H1 (cell line): ENCODE measurements at regions of chr1 and their contacts with region 1.

Region 1: DNA sequence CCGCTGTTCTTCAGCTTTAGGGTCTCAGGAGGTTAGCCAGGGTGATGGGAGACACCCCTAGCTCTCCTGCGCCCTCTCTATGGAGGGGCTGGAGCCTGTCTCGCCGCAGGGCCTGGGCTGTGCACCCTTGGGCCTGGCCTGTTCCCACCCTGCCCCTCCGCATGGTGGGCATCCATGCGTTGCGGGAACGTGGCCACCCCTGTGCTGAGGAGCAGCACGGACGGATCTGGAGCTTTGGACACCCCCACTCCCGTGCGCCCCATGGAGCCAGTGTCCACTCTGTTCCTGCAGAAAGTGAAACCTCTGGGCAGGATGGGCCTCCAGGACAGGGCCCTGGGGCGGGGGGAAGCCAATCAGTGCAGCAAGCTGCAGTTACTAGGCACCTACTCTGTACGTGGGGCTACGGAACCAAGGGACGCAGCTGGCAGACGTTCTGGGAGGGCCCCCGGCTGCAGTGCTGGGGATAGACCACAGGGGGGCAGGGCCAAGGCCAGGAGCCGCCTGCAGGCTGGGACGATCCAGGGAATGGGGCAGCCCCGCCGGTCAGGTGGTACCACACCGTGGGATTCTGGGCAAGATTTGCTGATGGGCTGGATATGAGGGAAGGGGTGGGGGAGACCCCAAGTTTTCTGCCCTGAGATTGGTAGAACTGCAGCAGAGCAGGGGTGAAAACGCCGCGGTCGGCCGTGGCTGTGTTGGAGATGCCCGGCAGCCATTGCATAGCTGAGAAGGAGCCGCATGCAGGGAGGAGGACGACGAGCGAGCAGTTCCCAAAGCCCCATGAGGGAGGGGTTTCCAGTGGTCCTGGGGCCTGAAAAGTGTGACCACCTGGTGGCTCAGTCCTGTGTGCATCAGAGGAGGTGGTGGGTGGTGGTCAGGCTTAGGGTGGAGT is 43.3 kb downstream of the TP73 start:
- DNase-seq: peak in 1 of 2 experiments; percentile 93
- H3K4me3 ChIP-seq: no peak overlapping the region
- H3K27ac ChIP-seq: no peak overlapping the region
- H3K4me1 ChIP-seq: peaks cover 0 to 3% (median 1%) of the 10 kb centered on the region in 4 experiments; a peak in 2 of 7 replicates
- H3K27me3 ChIP-seq: peaks cover 0 to 7% (median 4%) of the 10 kb centered on the region in 4 experiments; a peak in 3 of 7 replicates
- CTCF ChIP-seq: peak in 2 of 3 experiments; percentile 82 to 93; a peak in 3 of 4 replicates
- EP300 ChIP-seq: no peak
- POLR2A ChIP-seq: no peak
- RAD21 ChIP-seq: peak; percentile 60 to 72

Region 2: GRCh38 chr1:3683992-3684391 is 11.6 kb before region 1 on chr1:
- CTCF ChIA-PET with region 1: interaction called, 32 read pairs
- POLR2A ChIA-PET with region 1: interaction called, 3 read pairs
- DNase-seq: peak in 1 of 2 experiments; percentile 93
- H3K4me3 ChIP-seq: peak overlapping the region in 2 of 4 experiments; percentile 15 to 45; a peak in 4 of 8 replicates
- H3K27ac ChIP-seq: no peak overlapping the region
- H3K4me1 ChIP-seq: peaks cover 0 to 27% (median 14%) of the 10 kb centered on the region in 4 experiments; a peak in 6 of 7 replicates
- H3K27me3 ChIP-seq: peaks cover 0 to 8% (median 3%) of the 10 kb centered on the region in 4 experiments; a peak in 3 of 7 replicates
- CTCF ChIP-seq: no peak
- EP300 ChIP-seq: no peak
- POLR2A ChIP-seq: no peak
- RAD21 ChIP-seq: no peak

Region 3: GRCh38 chr1:3712573-3713535 is 17.3 kb after region 1 on chr1:
- CTCF ChIA-PET with region 1: interaction called, 42 read pairs
- POLR2A ChIA-PET with region 1: interaction called, 3 read pairs
- DNase-seq: no peak
- H3K4me3 ChIP-seq: no peak overlapping the region
- H3K27ac ChIP-seq: no peak overlapping the region
- H3K4me1 ChIP-seq: peaks cover 4 to 28% (median 20%) of the 10 kb centered on the region in 4 experiments
- H3K27me3 ChIP-seq: peaks cover 0 to 17% (median 7%) of the 10 kb centered on the region in 4 experiments; a peak in 4 of 7 replicates
- CTCF ChIP-seq: no peak
- EP300 ChIP-seq: no peak
- POLR2A ChIP-seq: no peak
- RAD21 ChIP-seq: no peak

Region 4: GRCh38 chr1:3717715-3718601 is 22.4 kb after region 1 on chr1:
- CTCF ChIA-PET with region 1: interaction called, 42 read pairs
- POLR2A ChIA-PET with region 1: interaction called, 5 read pairs
- DNase-seq: peak in 1 of 2 experiments; percentile 92
- H3K4me3 ChIP-seq: peak overlapping the region in 1 of 4 experiments; percentile 45; a peak in 2 of 8 replicates
- H3K27ac ChIP-seq: no peak overlapping the region
- H3K4me1 ChIP-seq: peaks cover 0 to 18% (median 8%) of the 10 kb centered on the region in 4 experiments; a peak in 5 of 7 replicates
- H3K27me3 ChIP-seq: peaks cover 0 to 4% (median 0%) of the 10 kb centered on the region in 4 experiments; a peak in 3 of 7 replicates
- CTCF ChIP-seq: no peak; a peak in 1 of 4 replicates
- EP300 ChIP-seq: no peak
- POLR2A ChIP-seq: no peak
- RAD21 ChIP-seq: no peak

Region 5: GRCh38 chr1:3785456-3786157 is 90.0 kb after region 1 on chr1:
- CTCF ChIA-PET with region 1: no interaction called
- POLR2A ChIA-PET with region 1: no interaction called
- DNase-seq: peak in 1 of 2 experiments; percentile 84
- H3K4me3 ChIP-seq: no peak overlapping the region
- H3K27ac ChIP-seq: no peak overlapping the region
- H3K4me1 ChIP-seq: peaks cover 0 to 13% (median 10%) of the 10 kb centered on the region in 4 experiments; a peak in 5 of 7 replicates
- H3K27me3 ChIP-seq: no peaks in the 10 kb centered on the region
- CTCF ChIP-seq: peak; percentile 76 to 88 (median 87)
- EP300 ChIP-seq: no peak
- POLR2A ChIP-seq: no peak
- RAD21 ChIP-seq: peak; percentile 87 to 90

Region 6: GRCh38 chr1:3836421-3836820 is 140.8 kb after region 1 on chr1:
- CTCF ChIA-PET with region 1: no interaction called
- POLR2A ChIA-PET with region 1: no interaction called
- DNase-seq: no peak
- H3K4me3 ChIP-seq: no peak overlapping the region
- H3K27ac ChIP-seq: no peak overlapping the region
- H3K4me1 ChIP-seq: no peaks in the 10 kb centered on the region
- H3K27me3 ChIP-seq: no peaks in the 10 kb centered on the region
- CTCF ChIP-seq: no peak
- EP300 ChIP-seq: no peak
- POLR2A ChIP-seq: no peak
- RAD21 ChIP-seq: no peak

Region 7: GRCh38 chr1:3922201-3922725 is 226.7 kb after region 1 on chr1:
- CTCF ChIA-PET with region 1: no interaction called
- POLR2A ChIA-PET with region 1: no interaction called
- DNase-seq: no peak
- H3K4me3 ChIP-seq: no peak overlapping the region
- H3K27ac ChIP-seq: no peak overlapping the region
- H3K4me1 ChIP-seq: peaks cover 0 to 3% (median 0%) of the 10 kb centered on the region in 4 experiments; a peak in 2 of 7 replicates
- H3K27me3 ChIP-seq: no peaks in the 10 kb centered on the region
- CTCF ChIP-seq: no peak
- EP300 ChIP-seq: no peak
- POLR2A ChIP-seq: no peak
- RAD21 ChIP-seq: no peak